Ovary (tissue), 10 donors: ENCODE measurements at regions of chr1 and their contacts with region 1.

Region 1: GRCh38 chr1:2240270-2241156 is 12.4 kb downstream of the SKI start:
- DNase-seq: peak in 4 of 5 donors; percentile 59 to 71 (median 66)
- H3K4me3 ChIP-seq: peak overlapping the region; percentile 15
- H3K27ac ChIP-seq: no peak overlapping the region
- H3K4me1 ChIP-seq: peaks cover 37% of the 10 kb centered on the region
- H3K27me3 ChIP-seq: no peaks in the 10 kb centered on the region
- CTCF ChIP-seq: no peak
- EP300 ChIP-seq: no peak
- POLR2A ChIP-seq: no peak

Region 2: DNA sequence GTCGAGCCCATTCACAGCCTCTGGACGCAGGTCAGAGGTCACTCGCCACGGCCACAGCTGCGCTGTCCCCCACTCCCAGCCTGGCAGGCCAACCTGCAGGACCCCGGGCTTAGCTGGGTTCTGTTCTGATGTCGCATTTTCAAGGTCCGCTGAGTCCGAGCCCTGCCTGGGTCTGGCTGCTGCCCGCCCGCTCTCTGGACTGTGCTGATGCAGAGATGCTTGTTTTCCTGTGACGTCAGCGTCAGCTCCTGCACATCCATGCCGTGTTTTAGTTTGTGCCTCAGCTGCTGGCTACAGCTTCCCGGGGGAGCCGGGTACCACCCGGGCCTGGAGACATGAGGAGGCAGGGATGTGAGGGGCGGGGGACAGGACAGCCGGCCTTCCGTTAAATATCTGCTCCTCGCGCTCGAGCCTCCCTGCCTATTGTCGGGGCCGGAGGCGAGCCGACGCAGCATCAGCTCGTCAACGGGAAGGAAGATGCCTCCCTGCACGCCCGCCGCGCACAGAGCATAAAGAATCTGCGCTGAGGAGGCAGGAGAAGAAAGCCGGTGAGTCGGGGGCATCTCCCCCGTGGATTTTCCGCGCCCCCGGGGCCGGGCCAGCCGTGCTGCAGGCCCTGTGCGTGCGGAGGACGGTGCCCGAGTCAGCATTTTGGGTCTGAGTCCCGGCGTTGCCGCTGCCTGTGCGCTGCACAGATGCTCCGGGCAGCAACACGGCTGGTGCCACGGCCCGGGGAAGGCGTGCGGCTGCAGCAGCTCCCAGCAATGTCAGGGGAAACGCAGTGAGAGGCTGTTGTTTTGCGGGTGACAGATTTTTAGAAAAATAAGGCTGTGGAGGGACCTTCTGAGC is 166.9 kb before region 1 on chr1:
- intact Hi-C with region 1: no loop called
- DNase-seq: no peak
- H3K4me3 ChIP-seq: no peak overlapping the region
- H3K27ac ChIP-seq: no peak overlapping the region
- H3K4me1 ChIP-seq: no peaks in the 10 kb centered on the region
- H3K27me3 ChIP-seq: no peaks in the 10 kb centered on the region
- CTCF ChIP-seq: no peak
- EP300 ChIP-seq: no peak
- POLR2A ChIP-seq: no peak

Region 3: GRCh38 chr1:2214541-2215281 is 25.8 kb before region 1 on chr1:
- intact Hi-C with region 1: no loop called
- DNase-seq: peak; percentile 72 to 88 (median 81)
- H3K4me3 ChIP-seq: no peak overlapping the region
- H3K27ac ChIP-seq: peak overlapping the region; percentile 96 to 99
- H3K4me1 ChIP-seq: peaks cover 24% of the 10 kb centered on the region
- H3K27me3 ChIP-seq: no peaks in the 10 kb centered on the region
- CTCF ChIP-seq: no peak
- EP300 ChIP-seq: no peak
- POLR2A ChIP-seq: no peak

Region 4: GRCh38 chr1:2270260-2271100 is 30.0 kb after region 1 on chr1:
- intact Hi-C with region 1: loop called in 2 of 4 experiments (anchors 5 kb)
- DNase-seq: peak in 2 of 5 donors; percentile 25 to 28
- H3K4me3 ChIP-seq: no peak overlapping the region
- H3K27ac ChIP-seq: peak overlapping the region in 1 of 2 donors; percentile 21
- H3K4me1 ChIP-seq: peaks cover 71% of the 10 kb centered on the region
- H3K27me3 ChIP-seq: no peaks in the 10 kb centered on the region
- CTCF ChIP-seq: no peak
- EP300 ChIP-seq: no peak
- POLR2A ChIP-seq: no peak

Region 5: GRCh38 chr1:2299131-2299627 is 58.7 kb after region 1 on chr1:
- intact Hi-C with region 1: loop called in 1 of 4 experiments (anchors 5 kb)
- DNase-seq: no peak
- H3K4me3 ChIP-seq: no peak overlapping the region
- H3K27ac ChIP-seq: no peak overlapping the region
- H3K4me1 ChIP-seq: peaks cover 21% of the 10 kb centered on the region
- H3K27me3 ChIP-seq: no peaks in the 10 kb centered on the region
- CTCF ChIP-seq: no peak
- EP300 ChIP-seq: no peak
- POLR2A ChIP-seq: no peak

Region 6: DNA sequence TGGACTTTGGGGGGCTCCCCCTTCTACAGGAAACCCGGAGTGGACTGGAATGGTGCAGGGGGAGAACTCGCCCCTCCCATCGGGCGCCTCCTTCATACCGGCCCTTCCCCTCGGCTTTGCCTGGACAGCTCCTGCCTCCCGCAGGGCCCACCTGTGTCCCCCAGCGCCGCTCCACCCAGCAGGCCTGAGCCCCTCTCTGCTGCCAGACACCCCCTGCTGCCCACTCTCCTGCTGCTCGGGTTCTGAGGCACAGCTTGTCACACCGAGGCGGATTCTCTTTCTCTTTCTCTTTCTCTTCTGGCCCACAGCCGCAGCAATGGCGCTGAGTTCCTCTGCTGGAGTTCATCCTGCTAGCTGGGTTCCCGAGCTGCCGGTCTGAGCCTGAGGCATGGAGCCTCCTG is 315.8 kb after region 1 on chr1 and contains the start of gene TNFRSF14:
- intact Hi-C with region 1: loop called in 1 of 4 experiments (anchors 5 kb)
- DNase-seq: peak; percentile 49 to 69 (median 61)
- H3K4me3 ChIP-seq: peak within 1 kb of the TSS; percentile 64
- H3K27ac ChIP-seq: peak within 1 kb of the TSS; percentile 82 to 88
- H3K4me1 ChIP-seq: peaks cover 12% of the 10 kb centered on the region
- H3K27me3 ChIP-seq: no peaks in the 10 kb centered on the region
- CTCF ChIP-seq: no peak
- EP300 ChIP-seq: no peak
- POLR2A ChIP-seq: peak; percentile 14
- total RNA-seq, gene TNFRSF14: 33.3 to 78.5 (median 60.5) TPM